ENCODE measurements at regions of chr21 and their contacts with region 1.

Region 1: DNA sequence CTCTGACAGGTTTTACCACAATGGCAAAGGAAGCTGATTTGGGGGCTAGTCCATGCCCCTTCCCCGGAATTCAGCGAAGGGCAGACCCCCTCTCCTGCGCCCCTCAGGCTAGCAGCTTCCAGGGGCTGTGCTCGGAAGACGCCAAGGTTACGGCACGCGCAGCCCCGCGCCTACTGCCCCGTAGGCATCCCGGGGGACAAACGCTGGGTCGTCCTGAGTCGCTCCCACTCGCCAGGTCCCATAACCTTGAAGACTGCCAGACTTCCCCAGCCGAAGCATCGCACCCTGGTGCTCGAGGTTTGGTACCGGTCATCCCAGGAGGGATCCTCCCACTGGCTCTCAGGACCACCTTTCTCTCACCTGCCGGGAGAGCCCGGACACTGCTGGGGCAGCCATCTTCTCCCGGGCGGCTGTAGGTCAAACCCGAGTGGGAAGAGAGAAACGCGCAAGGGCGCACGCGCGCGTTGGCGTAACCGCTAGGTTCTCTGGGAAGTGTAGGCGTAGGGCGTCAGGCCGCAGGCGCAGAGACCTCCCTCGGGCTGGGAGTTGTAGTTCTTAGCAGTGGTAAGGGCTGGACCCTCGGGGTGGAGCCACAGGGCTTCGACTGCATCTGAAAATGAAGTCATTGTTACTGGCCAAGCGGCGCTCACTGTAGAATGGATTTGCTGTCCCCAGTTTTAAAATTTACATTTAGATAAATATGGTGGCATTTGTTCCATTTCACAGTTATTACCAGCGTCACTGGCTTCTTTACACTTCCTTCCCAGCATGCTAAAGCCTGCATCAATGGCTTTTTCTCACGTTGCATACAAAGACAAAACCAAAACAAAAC is at the start of gene ATP5PO:
- DNase-seq: peak; percentile 97
- H3K4me3 Mint-ChIP-seq: peak within 1 kb of the TSS; percentile 99
- H3K27ac Mint-ChIP-seq: peak within 1 kb of the TSS; percentile 98
- H3K4me1 Mint-ChIP-seq: peaks cover 39% of the 10 kb centered on the region
- H3K27me3 Mint-ChIP-seq: no peaks in the 10 kb centered on the region
- total RNA-seq, gene ATP5PO: 168 and 176 TPM in 2 replicates

Region 2: DNA sequence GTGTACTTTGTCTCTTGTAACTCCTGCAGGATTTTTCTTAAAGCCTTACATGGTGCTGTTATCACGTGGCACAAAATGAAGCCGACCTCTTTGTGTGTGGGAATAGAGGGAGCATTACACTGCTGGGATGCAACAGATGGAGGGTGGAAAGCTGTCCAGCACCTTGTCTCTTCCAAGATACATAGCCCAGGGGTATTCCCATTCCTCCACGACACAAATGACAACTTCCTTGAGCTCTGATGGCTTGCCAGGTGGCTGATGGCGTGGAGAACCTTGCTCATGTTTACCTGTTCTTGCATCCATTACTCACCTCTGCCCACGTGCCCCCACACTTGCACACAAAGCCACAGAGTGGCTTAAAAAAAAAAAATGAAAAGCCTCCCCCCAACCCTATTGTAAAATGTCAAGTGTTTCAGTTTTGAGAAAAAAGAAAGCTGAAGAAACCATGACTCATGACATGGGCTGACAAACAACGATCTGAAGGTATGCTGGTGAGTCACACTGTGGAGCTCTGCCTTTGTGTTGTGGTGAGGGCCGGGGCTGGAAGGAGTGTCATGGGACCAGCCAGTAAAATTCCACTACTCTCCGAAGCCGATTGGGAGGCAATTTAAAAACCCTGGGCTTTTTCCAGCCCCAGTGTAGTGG is 32.0 kb after region 1 on chr21:
- intact Hi-C with region 1: loop called (anchors 1 kb)
- DNase-seq: peak; percentile 85
- H3K4me3 Mint-ChIP-seq: peak overlapping the region; percentile 65
- H3K27ac Mint-ChIP-seq: peak overlapping the region; percentile 97
- H3K4me1 Mint-ChIP-seq: peaks cover 77% of the 10 kb centered on the region
- H3K27me3 Mint-ChIP-seq: peaks cover 4% of the 10 kb centered on the region

Region 3: GRCh38 chr21:33998402-33998801 is 82.8 kb after region 1 on chr21:
- intact Hi-C with region 1: no loop called
- DNase-seq: no peak
- H3K4me3 Mint-ChIP-seq: no peak overlapping the region
- H3K27ac Mint-ChIP-seq: no peak overlapping the region
- H3K4me1 Mint-ChIP-seq: peaks cover 43% of the 10 kb centered on the region
- H3K27me3 Mint-ChIP-seq: no peaks in the 10 kb centered on the region

Region 4: GRCh38 chr21:34029743-34030528 is 114.4 kb after region 1 on chr21:
- intact Hi-C with region 1: loop called (anchors 5 kb)
- DNase-seq: peak; percentile 42
- H3K4me3 Mint-ChIP-seq: peak overlapping the region; percentile 51
- H3K27ac Mint-ChIP-seq: peak overlapping the region; percentile 96
- H3K4me1 Mint-ChIP-seq: peaks cover 30% of the 10 kb centered on the region
- H3K27me3 Mint-ChIP-seq: no peaks in the 10 kb centered on the region

Region 5: DNA sequence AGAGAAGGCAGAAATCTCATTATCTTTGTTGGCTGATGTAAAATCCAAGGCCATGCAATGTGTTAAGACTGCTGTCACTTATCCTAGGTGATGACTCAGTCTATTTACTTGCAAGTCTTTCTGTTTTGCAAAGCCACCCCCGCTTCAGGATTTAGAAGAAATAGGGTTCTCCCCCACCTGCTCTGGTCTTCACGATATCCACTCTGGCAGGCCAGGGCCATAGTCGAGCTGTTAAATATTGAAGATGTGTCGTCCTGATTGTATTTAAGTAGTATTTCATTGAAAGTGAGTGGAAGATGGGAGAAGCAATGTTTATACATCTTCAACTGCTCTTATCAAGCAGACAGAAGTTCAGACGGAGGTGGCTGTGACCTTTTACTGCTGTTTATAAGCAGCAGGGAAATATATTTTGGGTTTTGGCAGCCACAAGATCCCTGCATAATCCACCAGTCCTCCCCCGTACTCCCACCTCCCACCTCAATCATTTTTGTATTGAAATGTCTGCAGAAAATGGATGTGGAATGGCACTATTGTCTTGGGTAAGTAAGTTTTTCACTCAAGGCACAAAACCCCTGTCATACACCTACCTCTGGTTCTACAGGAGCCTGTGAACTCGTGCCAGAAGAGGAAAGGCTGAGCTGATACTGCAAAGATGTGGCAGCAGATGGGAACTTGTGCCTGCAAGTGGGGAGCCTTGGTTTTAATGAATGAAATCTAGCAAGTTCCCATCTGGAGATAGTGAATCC is 275.2 kb after region 1 on chr21:
- intact Hi-C with region 1: loop called (anchors 2 kb)
- DNase-seq: no peak
- H3K4me3 Mint-ChIP-seq: peak overlapping the region; percentile 66
- H3K27ac Mint-ChIP-seq: peak overlapping the region; percentile 92
- H3K4me1 Mint-ChIP-seq: peaks cover 53% of the 10 kb centered on the region
- H3K27me3 Mint-ChIP-seq: no peaks in the 10 kb centered on the region

Region 6: DNA sequence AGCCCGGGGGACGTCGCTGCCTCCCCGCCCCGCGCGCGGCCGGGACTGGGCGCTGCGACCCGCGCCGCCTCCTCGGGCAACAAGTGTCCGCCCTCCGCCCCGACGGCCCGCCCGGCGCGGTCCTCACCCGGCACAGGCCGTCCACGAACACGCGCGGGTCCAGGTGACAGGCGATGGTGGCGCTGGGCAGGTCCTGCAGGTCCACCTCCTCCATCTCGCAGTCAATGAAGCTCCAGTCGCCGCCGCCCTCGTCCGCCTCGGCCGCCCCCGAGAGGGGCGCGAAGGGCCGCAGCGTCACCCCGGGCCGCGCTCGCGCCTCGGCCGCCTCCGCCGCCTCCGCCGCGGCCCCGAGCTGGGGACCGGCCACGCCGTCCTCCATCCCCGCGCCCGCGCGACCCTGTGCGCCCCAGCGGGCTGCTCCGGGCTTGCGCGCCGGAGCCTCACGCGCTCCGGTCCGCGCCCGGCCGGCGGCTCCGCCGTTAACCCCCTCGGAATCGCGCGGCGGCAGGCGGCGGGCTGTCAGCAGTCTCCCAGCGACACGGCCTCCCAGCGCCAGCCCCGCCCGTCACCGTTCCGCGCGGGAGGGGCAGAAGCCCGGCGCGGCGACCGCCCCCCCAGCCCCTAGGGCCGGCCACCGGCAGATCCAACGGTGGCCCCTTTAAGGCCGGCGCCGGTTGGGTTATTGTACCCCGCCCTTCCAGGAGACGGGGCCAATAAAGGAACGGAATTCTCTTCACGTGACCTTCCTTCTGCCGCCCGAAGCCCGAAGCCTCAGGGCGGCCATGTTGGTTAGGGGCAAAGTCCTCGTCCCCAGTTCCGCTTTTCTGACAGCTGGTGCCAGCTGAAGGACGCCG is 699.3 kb after region 1 on chr21 and contains the start of gene RCAN1:
- intact Hi-C with region 1: loop called (anchors 1 kb)
- DNase-seq: peak; percentile 86
- H3K4me3 Mint-ChIP-seq: peak within 1 kb of the TSS; percentile 85
- H3K27ac Mint-ChIP-seq: peak within 1 kb of the TSS; percentile 57
- H3K4me1 Mint-ChIP-seq: peaks cover 30% of the 10 kb centered on the region
- H3K27me3 Mint-ChIP-seq: peaks cover 5% of the 10 kb centered on the region
- total RNA-seq, gene RCAN1: 10.7 and 11.1 TPM in 2 replicates